ENCODE measurements at regions of chr1 and their contacts with region 1.

Region 1: GRCh38 chr1:70528590-70529333 is 117.7 kb downstream of the CTH start:
- DNase-seq: peak in 1 of 2 experiments; percentile 58
- H3K4me3 ChIP-seq: no peak overlapping the region
- H3K27ac ChIP-seq: no peak overlapping the region
- H3K4me1 ChIP-seq: no peaks in the 10 kb centered on the region
- H3K27me3 ChIP-seq: no peaks in the 10 kb centered on the region
- CTCF ChIP-seq: peak; percentile 67 to 88 (median 74)
- EP300 ChIP-seq: no peak
- POLR2A ChIP-seq: no peak
- RAD21 ChIP-seq: peak; percentile 93 to 94

Region 2: DNA sequence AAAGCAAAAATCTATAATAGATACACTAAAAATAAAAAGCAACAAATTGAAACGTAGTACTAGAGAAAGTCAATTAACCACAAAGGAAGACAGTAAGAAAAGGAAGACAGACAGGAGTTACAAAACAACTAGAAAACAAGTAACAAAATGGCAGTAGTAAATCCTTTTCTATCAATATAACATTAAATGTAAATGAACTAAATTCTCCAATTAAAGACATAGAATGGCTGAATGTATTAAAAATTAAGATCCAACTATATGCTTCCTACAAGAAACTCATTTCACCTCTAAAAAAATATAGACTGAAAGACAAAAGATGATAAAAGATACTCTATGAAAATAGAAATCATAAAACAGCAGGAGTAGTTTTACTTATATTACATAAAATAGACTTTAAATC is 38.6 kb before region 1 on chr1:
- CTCF ChIA-PET with region 1: no interaction called
- POLR2A ChIA-PET with region 1: no interaction called
- DNase-seq: no peak
- H3K4me3 ChIP-seq: no peak overlapping the region
- H3K27ac ChIP-seq: no peak overlapping the region
- H3K4me1 ChIP-seq: no peaks in the 10 kb centered on the region
- H3K27me3 ChIP-seq: no peaks in the 10 kb centered on the region
- CTCF ChIP-seq: no peak
- EP300 ChIP-seq: no peak
- POLR2A ChIP-seq: no peak
- RAD21 ChIP-seq: no peak

Region 3: GRCh38 chr1:70554341-70554740 is 25.6 kb after region 1 on chr1:
- CTCF ChIA-PET with region 1: no interaction called
- POLR2A ChIA-PET with region 1: no interaction called
- DNase-seq: no peak
- H3K4me3 ChIP-seq: no peak overlapping the region
- H3K27ac ChIP-seq: no peak overlapping the region
- H3K4me1 ChIP-seq: peaks cover 1 to 8% (median 5%) of the 10 kb centered on the region in 4 experiments; a peak in 3 of 7 replicates
- H3K27me3 ChIP-seq: no peaks in the 10 kb centered on the region
- CTCF ChIP-seq: no peak
- EP300 ChIP-seq: no peak
- POLR2A ChIP-seq: no peak
- RAD21 ChIP-seq: no peak

Region 4: GRCh38 chr1:70617728-70618127 is 89.0 kb after region 1 on chr1:
- CTCF ChIA-PET with region 1: interaction called, 81 read pairs
- POLR2A ChIA-PET with region 1: no interaction called
- DNase-seq: no peak
- H3K4me3 ChIP-seq: no peak overlapping the region
- H3K27ac ChIP-seq: no peak overlapping the region
- H3K4me1 ChIP-seq: no peaks in the 10 kb centered on the region
- H3K27me3 ChIP-seq: no peaks in the 10 kb centered on the region
- CTCF ChIP-seq: peak in 2 of 3 experiments; percentile 52 to 59; a peak in 3 of 4 replicates
- EP300 ChIP-seq: no peak
- POLR2A ChIP-seq: no peak
- RAD21 ChIP-seq: peak; percentile 79 to 85

Region 5: DNA sequence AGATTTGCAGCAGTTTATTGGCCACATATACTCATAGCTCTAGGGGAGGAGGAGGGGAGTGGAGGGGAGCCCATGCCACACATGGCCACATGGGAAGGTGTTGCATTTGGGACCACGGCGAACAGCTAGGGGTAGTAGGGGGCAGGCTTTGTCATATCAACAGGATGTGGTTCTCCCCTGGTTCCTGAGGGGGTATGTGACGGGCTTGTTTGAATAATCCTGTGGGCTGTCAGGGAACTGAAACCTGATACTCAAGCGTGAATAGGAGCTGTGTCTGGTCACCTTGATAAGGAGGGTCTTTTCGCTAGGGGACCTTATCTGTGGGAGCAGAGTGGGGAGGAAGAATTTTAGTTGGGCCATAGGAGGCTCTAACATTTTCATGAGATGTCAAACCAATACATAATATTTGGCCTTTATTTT is 147.0 kb after region 1 on chr1:
- CTCF ChIA-PET with region 1: interaction called, 19 read pairs
- POLR2A ChIA-PET with region 1: no interaction called
- DNase-seq: peak in 1 of 2 experiments; percentile 52
- H3K4me3 ChIP-seq: no peak overlapping the region
- H3K27ac ChIP-seq: no peak overlapping the region
- H3K4me1 ChIP-seq: peaks cover 1 to 10% (median 5%) of the 10 kb centered on the region in 4 experiments; a peak in 5 of 7 replicates
- H3K27me3 ChIP-seq: no peaks in the 10 kb centered on the region
- CTCF ChIP-seq: peak in 2 of 3 experiments; percentile 4 to 12; a peak in 1 of 4 replicates
- EP300 ChIP-seq: no peak
- POLR2A ChIP-seq: no peak
- RAD21 ChIP-seq: peak in 1 of 2 experiments; percentile 22; a peak in 1 of 4 replicates

Region 6: DNA sequence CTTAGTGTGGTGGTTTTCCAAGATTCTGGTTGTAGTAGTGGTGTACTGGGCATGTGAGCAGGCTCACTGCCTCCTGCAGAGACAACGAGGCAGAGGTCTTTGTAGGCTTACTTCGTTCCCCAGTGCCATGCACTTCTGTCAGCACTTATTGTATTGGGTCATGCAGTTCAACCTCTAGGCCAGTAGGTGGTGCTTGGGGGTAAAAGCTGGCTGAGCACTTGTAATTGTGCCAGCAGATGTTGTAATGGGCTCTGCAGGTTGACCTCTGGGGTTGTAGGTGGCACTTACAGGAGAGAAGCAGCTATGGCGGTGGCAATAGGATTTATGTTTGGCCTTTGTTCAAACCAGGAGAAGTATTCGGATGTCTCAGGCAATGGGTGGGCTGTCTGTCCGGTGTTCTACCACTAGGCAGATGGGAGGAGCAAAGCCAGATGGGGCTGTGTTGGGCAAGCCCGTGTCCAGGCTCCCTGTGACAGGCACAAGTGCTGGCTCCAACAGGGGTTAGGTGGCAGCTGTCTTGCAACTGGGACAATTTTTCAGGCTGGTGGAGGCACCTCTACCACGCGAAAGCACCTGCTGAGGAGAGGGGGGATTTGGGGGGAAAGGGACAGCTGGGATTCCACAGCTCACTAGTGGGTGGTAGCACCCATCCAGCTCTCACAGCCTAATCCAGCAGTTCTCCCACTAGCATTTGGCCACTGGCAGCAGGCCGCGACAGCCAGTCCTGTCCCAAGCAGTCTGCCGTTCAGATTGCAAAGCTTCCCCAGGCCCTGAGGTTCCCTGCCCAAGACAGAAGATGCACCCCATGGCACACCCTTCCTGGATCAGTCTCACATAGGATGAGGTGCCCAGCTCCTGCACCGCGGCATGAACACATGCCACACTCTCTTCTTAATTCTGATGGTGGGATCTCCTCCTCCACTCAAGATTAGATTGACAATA is 156.8 kb after region 1 on chr1:
- CTCF ChIA-PET with region 1: interaction called, 13 read pairs
- POLR2A ChIA-PET with region 1: no interaction called
- DNase-seq: peak; percentile 31 to 71
- H3K4me3 ChIP-seq: no peak overlapping the region
- H3K27ac ChIP-seq: no peak overlapping the region
- H3K4me1 ChIP-seq: peaks cover 0 to 3% (median under 1%) of the 10 kb centered on the region in 4 experiments; a peak in 3 of 7 replicates
- H3K27me3 ChIP-seq: no peaks in the 10 kb centered on the region
- CTCF ChIP-seq: peak; percentile 71 to 96 (median 87)
- EP300 ChIP-seq: no peak
- POLR2A ChIP-seq: no peak
- RAD21 ChIP-seq: peak; percentile 83 to 89

Region 7: GRCh38 chr1:70847013-70847412 is 318.3 kb after region 1 on chr1:
- CTCF ChIA-PET with region 1: no interaction called
- POLR2A ChIA-PET with region 1: no interaction called
- DNase-seq: no peak
- H3K4me3 ChIP-seq: no peak overlapping the region
- H3K27ac ChIP-seq: no peak overlapping the region
- H3K4me1 ChIP-seq: peaks cover 0 to 5% (median 0%) of the 10 kb centered on the region in 4 experiments; a peak in 2 of 7 replicates
- H3K27me3 ChIP-seq: no peaks in the 10 kb centered on the region
- CTCF ChIP-seq: no peak
- EP300 ChIP-seq: no peak
- POLR2A ChIP-seq: no peak
- RAD21 ChIP-seq: no peak

Region 8: DNA sequence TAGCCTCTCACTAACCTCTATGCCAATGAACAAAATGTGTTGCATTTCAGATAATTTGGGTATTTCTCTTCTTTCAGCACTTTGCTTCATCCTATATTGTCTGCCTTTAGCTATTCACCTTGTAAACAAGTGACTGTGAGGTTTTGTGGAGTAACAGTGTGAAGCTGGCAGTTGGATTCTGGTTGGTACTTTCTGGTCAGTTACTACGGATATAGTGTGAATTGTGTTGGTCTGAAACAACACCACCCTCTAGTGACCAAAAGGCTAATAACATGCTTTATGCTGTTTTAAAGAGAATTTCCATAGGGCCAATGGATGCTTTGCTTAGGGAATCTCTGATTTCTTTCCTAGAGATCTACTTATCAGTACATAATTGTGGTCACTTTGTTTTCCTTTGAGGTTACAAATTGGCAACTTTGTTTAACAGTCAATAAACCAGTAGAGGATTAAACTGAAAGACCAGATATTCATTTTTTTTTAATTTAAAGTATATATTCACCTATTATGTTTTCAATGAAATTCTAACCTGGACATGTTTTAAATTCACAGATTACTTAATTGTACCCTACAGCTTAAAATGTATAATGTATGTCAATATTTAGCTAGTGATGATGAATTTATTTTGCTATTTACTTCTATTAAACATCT is 521.3 kb after region 1 on chr1:
- CTCF ChIA-PET with region 1: interaction called, 26 read pairs
- POLR2A ChIA-PET with region 1: no interaction called
- DNase-seq: no peak
- H3K4me3 ChIP-seq: no peak overlapping the region
- H3K27ac ChIP-seq: no peak overlapping the region
- H3K4me1 ChIP-seq: peaks cover 0 to 7% (median 3%) of the 10 kb centered on the region in 4 experiments; a peak in 4 of 7 replicates
- H3K27me3 ChIP-seq: peaks cover 17 to 28% (median 21%) of the 10 kb centered on the region in 4 experiments
- CTCF ChIP-seq: peak in 2 of 3 experiments; percentile 66 to 79; a peak in 3 of 4 replicates
- EP300 ChIP-seq: no peak
- POLR2A ChIP-seq: no peak
- RAD21 ChIP-seq: peak; percentile 93 to 94

Measured in H1 (cell line).